Naive thymus-derived CD4-positive, alpha-beta T cell (primary cell): ENCODE measurements at regions of chr9 and their contacts with region 1.

Region 1: GRCh38 chr9:71768388-71769174 is at the start of gene CEMIP2:
- DNase-seq: peak; percentile 86 to 93 (median 89)
- ATAC-seq: peak; percentile 91
- H3K4me3 ChIP-seq: peak within 1 kb of the TSS; percentile 91
- H3K4me3 Mint-ChIP-seq: peak within 1 kb of the TSS; percentile 93 to 99 (median 96)
- H3K27ac ChIP-seq: peak within 1 kb of the TSS; percentile 95
- H3K27ac Mint-ChIP-seq: peak within 1 kb of the TSS; percentile 93 to 98 (median 97)
- H3K4me1 ChIP-seq: peaks cover 18 to 33% of the 10 kb centered on the region in 2 donors
- H3K4me1 Mint-ChIP-seq: peaks cover 28 to 45% (median 39%) of the 10 kb centered on the region in 7 donors
- H3K27me3 ChIP-seq: no peaks in the 10 kb centered on the region
- H3K27me3 Mint-ChIP-seq: no peaks in the 10 kb centered on the region
- total RNA-seq, gene CEMIP2: 69.5 to 183 (median 103) TPM

Region 2: GRCh38 chr9:71285191-71285656 is 483.4 kb before region 1 on chr9:
- CTCF ChIA-PET with region 1: interaction called, 3 read pairs
- POLR2A ChIA-PET with region 1: interaction called, 4 read pairs
- intact Hi-C with region 1: loop called (anchors 1 kb)
- DNase-seq: peak in 6 of 9 donors; percentile 10 to 42 (median 36)
- ATAC-seq: peak; percentile 79
- H3K4me3 ChIP-seq: no peak overlapping the region
- H3K4me3 Mint-ChIP-seq: no peak overlapping the region
- H3K27ac ChIP-seq: no peak overlapping the region
- H3K27ac Mint-ChIP-seq: no peak overlapping the region
- H3K4me1 ChIP-seq: no peaks in the 10 kb centered on the region
- H3K4me1 Mint-ChIP-seq: peaks cover 0 to 3% (median 0%) of the 10 kb centered on the region in 7 donors
- H3K27me3 ChIP-seq: no peaks in the 10 kb centered on the region
- H3K27me3 Mint-ChIP-seq: peaks cover 2 to 9% (median 6%) of the 10 kb centered on the region in 5 donors

Region 3: DNA sequence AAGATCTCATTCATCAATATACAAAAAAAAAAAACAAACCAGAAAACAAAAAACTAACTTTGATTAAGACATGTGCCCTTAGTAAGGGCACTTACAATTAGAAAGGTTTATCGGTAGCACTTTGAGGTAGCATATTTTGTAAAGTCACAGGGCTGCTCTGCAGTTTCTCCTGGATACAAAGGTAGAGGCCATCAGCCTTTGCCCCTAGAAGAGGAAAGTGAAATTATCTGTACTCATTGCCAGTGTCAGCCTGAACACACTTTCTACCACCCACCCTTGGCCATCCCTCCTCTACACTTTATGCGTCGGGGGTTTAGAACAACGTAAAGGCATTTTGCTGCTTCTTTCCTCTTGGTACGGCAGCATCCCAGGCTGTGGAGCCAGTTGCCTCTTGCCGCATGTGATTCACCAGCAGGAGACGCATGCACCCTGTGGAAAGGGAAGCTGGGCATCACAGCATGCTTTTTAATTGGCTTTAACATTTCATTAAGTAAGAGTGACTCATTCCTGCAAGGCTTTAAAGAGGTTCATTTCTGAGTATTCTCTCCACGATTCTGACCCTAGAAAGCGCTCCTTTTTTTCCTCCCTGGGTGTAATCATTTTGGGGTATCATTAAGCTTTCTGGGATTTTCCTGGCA is 84.9 kb before region 1 on chr9:
- CTCF ChIA-PET with region 1: no interaction called
- POLR2A ChIA-PET with region 1: interaction called, 3 read pairs
- intact Hi-C with region 1: loop called in 1 of 2 experiments (anchors 1 kb)
- DNase-seq: no peak
- ATAC-seq: peak; percentile 64
- H3K4me3 ChIP-seq: no peak overlapping the region
- H3K4me3 Mint-ChIP-seq: peak overlapping the region in 6 of 10 donors; percentile 9 to 72 (median 37)
- H3K27ac ChIP-seq: no peak overlapping the region
- H3K27ac Mint-ChIP-seq: peak overlapping the region in 4 of 9 donors; percentile 26 to 70 (median 60)
- H3K4me1 ChIP-seq: peaks cover 20 to 31% of the 10 kb centered on the region in 2 donors
- H3K4me1 Mint-ChIP-seq: peaks cover 30 to 62% (median 57%) of the 10 kb centered on the region in 7 donors
- H3K27me3 ChIP-seq: no peaks in the 10 kb centered on the region
- H3K27me3 Mint-ChIP-seq: no peaks in the 10 kb centered on the region

Region 4: DNA sequence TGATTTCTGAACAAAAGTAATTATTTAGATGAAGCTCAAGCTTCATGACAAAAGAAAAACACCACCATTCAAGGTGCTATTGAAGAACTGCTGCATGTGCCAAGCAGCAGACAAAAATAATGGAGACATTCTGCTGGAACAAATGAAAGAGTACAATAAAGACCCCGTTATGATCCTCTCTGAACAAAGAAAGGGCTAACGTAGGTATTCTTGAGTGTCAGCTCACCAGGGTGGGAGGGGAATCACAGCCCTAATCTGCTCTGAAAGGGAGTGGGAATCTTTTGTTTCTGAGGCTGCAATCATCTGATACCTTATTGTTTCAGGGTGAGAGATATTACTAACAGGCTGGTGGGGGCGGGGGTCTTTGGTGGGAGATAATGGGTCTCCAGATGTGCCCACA is 15.7 kb before region 1 on chr9:
- CTCF ChIA-PET with region 1: interaction called, 7 read pairs
- POLR2A ChIA-PET with region 1: interaction called, 16 read pairs
- intact Hi-C with region 1: loop called (anchors 1 kb)
- DNase-seq: no peak
- ATAC-seq: no peak
- H3K4me3 ChIP-seq: no peak overlapping the region
- H3K4me3 Mint-ChIP-seq: peak overlapping the region in 3 of 10 donors; percentile 17 to 42 (median 25)
- H3K27ac ChIP-seq: no peak overlapping the region
- H3K27ac Mint-ChIP-seq: peak overlapping the region in 3 of 9 donors; percentile 13 to 65 (median 31)
- H3K4me1 ChIP-seq: peaks cover 12% of the 10 kb centered on the region in 2 donors
- H3K4me1 Mint-ChIP-seq: peaks cover 33 to 81% (median 68%) of the 10 kb centered on the region in 7 donors
- H3K27me3 ChIP-seq: no peaks in the 10 kb centered on the region
- H3K27me3 Mint-ChIP-seq: no peaks in the 10 kb centered on the region

Region 5: GRCh38 chr9:71806901-71807307 is 38.3 kb after region 1 on chr9:
- CTCF ChIA-PET with region 1: interaction called, 7 read pairs
- POLR2A ChIA-PET with region 1: interaction called, 70 read pairs
- intact Hi-C with region 1: no loop called
- DNase-seq: peak in 8 of 9 donors; percentile 20 to 65 (median 50)
- ATAC-seq: peak; percentile 98
- H3K4me3 ChIP-seq: no peak overlapping the region
- H3K4me3 Mint-ChIP-seq: no peak overlapping the region
- H3K27ac ChIP-seq: no peak overlapping the region
- H3K27ac Mint-ChIP-seq: peak overlapping the region in 7 of 9 donors; percentile 19 to 85 (median 65)
- H3K4me1 ChIP-seq: peaks cover 0 to 7% of the 10 kb centered on the region in 2 donors
- H3K4me1 Mint-ChIP-seq: peaks cover 0 to 21% (median 10%) of the 10 kb centered on the region in 7 donors
- H3K27me3 ChIP-seq: no peaks in the 10 kb centered on the region
- H3K27me3 Mint-ChIP-seq: peaks cover 0 to 3% (median 0%) of the 10 kb centered on the region in 5 donors

Region 6: DNA sequence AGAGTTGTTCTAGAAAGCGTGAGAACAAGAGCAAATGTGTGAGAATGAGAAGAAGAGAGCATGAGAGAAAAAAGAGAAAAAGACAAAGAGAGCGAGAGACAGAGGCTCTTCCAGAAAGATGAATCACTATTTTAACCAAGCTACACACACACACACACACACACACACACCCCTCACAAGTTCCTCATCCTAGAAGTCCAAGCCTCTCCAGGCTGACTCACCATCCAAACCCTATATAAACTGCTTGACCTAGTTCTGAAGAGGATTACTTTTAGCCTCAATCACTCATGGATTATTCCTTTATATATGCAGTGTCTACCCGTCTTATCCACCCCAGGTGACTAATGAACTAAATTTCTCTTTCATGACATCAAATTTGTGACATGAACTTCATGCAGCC is 254.3 kb after region 1 on chr9:
- CTCF ChIA-PET with region 1: interaction called, 3 read pairs
- POLR2A ChIA-PET with region 1: no interaction called
- intact Hi-C with region 1: loop called in 1 of 2 experiments (anchors 1 kb)
- DNase-seq: no peak
- ATAC-seq: peak; percentile 64
- H3K4me3 ChIP-seq: no peak overlapping the region
- H3K4me3 Mint-ChIP-seq: no peak overlapping the region
- H3K27ac ChIP-seq: no peak overlapping the region
- H3K27ac Mint-ChIP-seq: no peak overlapping the region
- H3K4me1 ChIP-seq: no peaks in the 10 kb centered on the region
- H3K4me1 Mint-ChIP-seq: no peaks in the 10 kb centered on the region
- H3K27me3 ChIP-seq: no peaks in the 10 kb centered on the region
- H3K27me3 Mint-ChIP-seq: no peaks in the 10 kb centered on the region

Region 7: GRCh38 chr9:73149371-73150067 is 1380.9 kb after region 1 on chr9:
- CTCF ChIA-PET with region 1: no interaction called
- POLR2A ChIA-PET with region 1: no interaction called
- intact Hi-C with region 1: loop called in 1 of 2 experiments (anchors 10 kb)
- DNase-seq: peak in 1 of 9 donors; percentile 57
- ATAC-seq: peak; percentile 49
- H3K4me3 ChIP-seq: peak overlapping the region; percentile 17
- H3K4me3 Mint-ChIP-seq: peak overlapping the region in 9 of 10 donors; percentile 8 to 79 (median 60)
- H3K27ac ChIP-seq: peak overlapping the region; percentile 32
- H3K27ac Mint-ChIP-seq: peak overlapping the region; percentile 71 to 96 (median 78)
- H3K4me1 ChIP-seq: peaks cover 28 to 32% of the 10 kb centered on the region in 2 donors
- H3K4me1 Mint-ChIP-seq: peaks cover 34 to 80% (median 54%) of the 10 kb centered on the region in 7 donors
- H3K27me3 ChIP-seq: no peaks in the 10 kb centered on the region
- H3K27me3 Mint-ChIP-seq: peaks cover 0 to 2% (median 0%) of the 10 kb centered on the region in 5 donors